Posterior vena cava (tissue), 2 donors: ENCODE measurements at regions of chr10 and their contacts with region 1.

Region 1: GRCh38 chr10:55629793-55630490 is 731.1 kb downstream of the ZWINT start:
- DNase-seq: peak; percentile 73

Region 2: DNA sequence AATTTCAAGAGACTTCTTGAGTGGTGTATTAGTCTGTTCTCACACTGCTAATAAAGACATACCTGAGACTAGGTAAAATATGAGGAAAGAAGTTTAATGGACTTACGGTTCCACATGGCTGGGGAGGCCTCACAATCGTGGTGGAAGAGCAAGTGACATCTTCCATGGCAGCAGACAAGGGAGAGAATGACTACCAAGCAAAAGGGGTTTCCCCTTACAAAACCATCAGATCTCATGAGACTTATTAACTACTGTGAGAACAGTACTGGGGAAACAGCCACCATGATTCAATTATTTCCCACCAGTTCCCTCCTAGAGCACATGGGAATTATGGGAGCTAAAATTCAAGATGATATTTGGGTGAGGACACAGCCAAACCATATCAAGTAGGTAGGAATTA is 979.4 kb before region 1 on chr10:
- intact Hi-C with region 1: no loop called
- DNase-seq: no peak

Region 3: DNA sequence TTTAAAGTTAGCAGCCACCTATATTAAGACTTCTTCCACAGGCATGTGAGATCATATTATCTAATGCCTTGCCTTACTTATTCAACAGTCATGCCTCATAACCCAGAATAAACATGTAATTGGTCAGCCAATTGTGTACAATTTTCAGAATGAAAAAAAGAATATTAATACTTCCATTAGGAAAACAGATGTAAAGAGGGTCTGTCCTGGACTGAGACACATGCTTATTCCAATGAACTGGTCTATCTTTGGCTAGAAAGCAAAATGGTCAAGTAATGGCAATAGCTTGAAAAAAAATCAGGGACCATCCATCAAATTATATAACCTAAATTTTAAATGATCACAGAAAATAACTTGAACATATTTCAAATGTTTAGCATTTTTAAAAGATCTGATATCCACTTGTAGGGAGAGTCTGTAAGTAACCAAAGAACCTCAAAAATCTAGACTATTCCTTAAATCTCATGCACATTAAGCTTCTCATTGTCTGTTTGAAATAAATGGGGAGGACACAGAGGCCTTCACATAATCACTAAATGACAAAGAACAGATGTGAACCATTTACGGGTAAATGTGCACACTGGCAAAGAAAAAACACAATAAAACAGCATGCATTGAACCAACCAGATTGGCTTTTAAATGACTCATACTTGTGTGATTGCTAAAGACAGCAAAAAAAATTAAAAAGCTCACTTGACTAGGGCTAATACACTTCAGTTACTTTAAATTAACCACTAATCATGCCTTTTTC is 260.1 kb before region 1 on chr10:
- intact Hi-C with region 1: loop called in 1 of 2 experiments (anchors 10 kb)
- DNase-seq: no peak